ENCODE measurements at regions of chr11 and their contacts with region 1.

Region 1: DNA sequence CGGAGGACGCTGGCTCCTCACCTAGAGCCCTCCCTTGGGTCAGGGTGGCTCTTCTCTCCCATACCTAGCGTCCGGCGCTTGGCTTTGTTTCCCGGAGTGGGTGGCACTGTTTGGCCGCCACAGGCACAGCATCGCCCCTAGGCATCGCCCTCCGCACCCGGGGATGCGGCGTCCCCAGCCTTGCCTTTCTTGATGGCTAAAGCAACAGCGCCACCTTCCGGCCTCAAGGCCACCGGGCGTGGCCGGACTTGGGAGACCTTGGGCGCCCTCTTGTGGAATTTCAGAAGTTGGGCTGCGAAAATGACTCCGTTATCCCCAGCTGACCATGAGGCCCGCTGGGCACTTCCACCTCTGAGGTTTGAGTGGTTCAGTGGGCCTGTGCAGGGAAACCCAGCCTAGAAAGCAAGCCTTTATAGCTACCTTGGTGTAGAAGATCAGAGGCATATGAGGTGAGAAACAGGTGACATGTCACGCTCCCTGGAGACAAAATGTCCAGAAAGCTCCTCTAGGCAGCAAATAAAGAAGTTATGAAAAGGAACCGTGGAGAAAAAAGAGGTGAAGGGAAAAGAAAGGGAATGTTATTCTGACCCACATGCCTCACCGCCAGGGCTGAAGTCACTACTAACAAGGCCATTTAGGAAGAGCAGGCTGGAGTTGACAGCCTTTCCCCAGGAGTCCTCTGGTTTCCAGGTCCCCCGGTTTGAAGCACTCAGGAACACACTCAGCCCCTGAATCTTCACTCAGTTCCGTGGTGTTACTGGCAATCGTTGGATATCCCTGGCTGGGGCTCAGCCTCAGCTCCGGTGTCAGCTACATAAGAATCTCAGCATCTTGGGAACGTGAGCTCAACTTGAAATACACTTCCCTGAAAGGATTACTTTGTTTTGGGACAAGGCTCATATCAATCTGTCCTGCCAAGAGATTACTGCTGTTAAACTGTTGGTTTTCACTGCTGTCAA is 54.1 kb downstream of the SNX19 start:
- DNase-seq: peak; percentile 93
- ATAC-seq: peak; percentile 94
- H3K4me3 Mint-ChIP-seq: no peak overlapping the region
- H3K27ac Mint-ChIP-seq: no peak overlapping the region
- H3K4me1 Mint-ChIP-seq: no peaks in the 10 kb centered on the region
- H3K27me3 Mint-ChIP-seq: peaks cover under 1% of the 10 kb centered on the region

Region 2: DNA sequence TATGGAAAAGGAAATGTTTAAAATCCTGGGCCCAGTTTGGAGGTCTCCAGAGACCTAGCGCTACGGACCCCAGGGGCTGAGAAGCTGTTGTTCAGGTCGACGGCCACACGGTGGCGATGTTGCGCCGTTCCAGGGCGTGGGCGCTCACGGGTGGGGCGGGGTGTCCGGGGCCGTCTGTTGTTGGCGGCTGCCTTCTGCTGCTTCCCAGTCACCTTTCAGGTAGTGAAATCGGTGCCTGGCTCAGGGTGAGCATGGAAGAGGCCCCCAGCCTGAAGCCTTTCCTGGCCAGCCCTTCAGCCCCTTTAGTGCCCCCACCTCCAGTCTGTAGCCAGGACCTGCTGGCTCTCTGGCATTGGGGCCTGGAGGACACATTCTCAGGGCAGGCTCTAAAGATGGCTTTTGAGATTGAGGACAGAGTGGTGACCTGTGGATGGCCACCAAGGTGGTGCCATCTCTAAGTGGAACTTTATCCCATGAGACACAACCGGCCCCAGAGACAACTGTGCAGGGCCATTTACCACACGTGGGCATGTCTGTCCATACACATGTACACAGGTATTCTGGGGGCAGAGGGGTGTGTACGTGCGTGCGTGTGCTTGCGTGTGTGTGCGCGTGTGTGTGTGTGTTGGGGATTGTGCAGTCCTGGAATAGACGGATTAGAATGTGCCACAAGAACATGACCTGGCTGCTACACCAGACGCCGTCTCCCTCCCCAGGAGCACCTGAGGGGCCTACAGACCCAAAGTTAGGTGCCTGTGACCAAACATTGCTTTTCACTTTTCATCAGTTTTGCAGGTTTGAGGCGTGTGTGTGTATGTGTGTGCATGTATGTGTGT is 648.8 kb before region 1 on chr11:
- CTCF ChIA-PET with region 1: interaction called, 10 read pairs
- POLR2A ChIA-PET with region 1: interaction called, 3 read pairs
- intact Hi-C with region 1: loop called in 1 of 2 experiments (anchors 1 kb)
- DNase-seq: peak; percentile 83
- ATAC-seq: peak; percentile 88
- H3K4me3 Mint-ChIP-seq: no peak overlapping the region
- H3K27ac Mint-ChIP-seq: no peak overlapping the region
- H3K4me1 Mint-ChIP-seq: no peaks in the 10 kb centered on the region
- H3K27me3 Mint-ChIP-seq: peaks cover 2% of the 10 kb centered on the region

Region 3: DNA sequence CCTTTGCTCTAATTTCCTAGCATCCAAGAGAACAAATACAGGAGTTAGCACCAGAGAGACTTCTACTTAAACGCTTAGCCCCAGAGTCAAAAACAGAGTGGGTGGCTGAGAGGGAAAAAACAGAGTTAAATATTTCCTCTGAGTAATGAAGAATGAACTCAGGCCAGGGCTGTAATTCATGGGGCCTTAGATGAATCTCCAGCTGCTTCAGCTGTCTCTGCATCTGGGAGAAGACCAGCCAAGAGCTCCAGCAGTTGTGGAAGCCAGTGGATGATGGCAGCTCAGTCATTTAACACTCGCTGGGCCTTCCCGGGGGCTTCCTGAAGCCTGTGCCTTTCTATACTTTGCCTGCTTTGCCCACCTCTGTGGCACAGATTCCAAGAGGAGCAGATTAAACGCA is 419.4 kb before region 1 on chr11:
- CTCF ChIA-PET with region 1: interaction called, 256 read pairs
- POLR2A ChIA-PET with region 1: no interaction called
- intact Hi-C with region 1: no loop called
- DNase-seq: no peak
- ATAC-seq: no peak
- H3K4me3 Mint-ChIP-seq: no peak overlapping the region
- H3K27ac Mint-ChIP-seq: no peak overlapping the region
- H3K4me1 Mint-ChIP-seq: peaks cover 10% of the 10 kb centered on the region
- H3K27me3 Mint-ChIP-seq: peaks cover 6% of the 10 kb centered on the region

Region 4: DNA sequence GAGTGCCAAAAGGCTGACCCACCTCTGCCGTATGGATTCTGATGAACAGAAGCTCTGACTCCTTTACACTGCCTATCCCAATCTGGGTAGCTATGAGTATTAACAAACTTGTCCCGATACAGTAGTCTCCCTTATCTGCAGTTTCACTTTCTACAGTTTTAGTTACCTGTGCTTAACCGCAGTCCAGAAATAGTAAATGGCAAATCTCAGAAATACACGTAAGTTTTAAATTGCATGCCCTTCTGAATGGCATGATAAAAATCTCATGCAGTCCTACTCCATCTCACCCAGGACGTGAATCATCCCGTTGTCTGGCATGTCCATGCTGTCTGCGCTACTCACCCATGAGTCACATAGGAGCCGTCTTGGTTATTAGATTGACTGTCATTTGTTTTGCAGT is 14.7 kb before region 1 on chr11:
- CTCF ChIA-PET with region 1: interaction called, 21 read pairs
- POLR2A ChIA-PET with region 1: no interaction called
- intact Hi-C with region 1: no loop called
- DNase-seq: no peak
- ATAC-seq: no peak
- H3K4me3 Mint-ChIP-seq: no peak overlapping the region
- H3K27ac Mint-ChIP-seq: no peak overlapping the region
- H3K4me1 Mint-ChIP-seq: no peaks in the 10 kb centered on the region
- H3K27me3 Mint-ChIP-seq: peaks cover 2% of the 10 kb centered on the region

Region 5: DNA sequence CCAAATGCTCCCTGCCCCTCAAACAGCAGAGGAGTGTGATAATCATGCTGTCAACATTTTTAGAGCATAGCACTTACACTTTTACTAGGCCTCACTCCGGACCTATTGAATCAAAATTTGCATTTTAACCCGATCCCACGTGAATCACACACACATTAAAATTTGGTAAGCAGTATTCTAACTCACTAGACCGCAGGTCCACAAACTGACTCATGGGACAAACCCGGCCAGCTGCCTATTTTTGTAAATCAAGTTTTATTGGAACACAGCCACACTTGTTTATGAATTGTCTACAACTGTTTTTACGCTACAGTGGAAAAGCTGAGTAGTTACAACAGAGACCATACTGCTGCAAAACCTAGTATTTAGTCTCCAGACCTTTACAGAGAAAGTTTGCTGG is 10.8 kb after region 1 on chr11:
- CTCF ChIA-PET with region 1: interaction called, 25 read pairs
- POLR2A ChIA-PET with region 1: no interaction called
- intact Hi-C with region 1: no loop called
- DNase-seq: no peak
- ATAC-seq: no peak
- H3K4me3 Mint-ChIP-seq: no peak overlapping the region
- H3K27ac Mint-ChIP-seq: peak overlapping the region; percentile 61
- H3K4me1 Mint-ChIP-seq: peaks cover 7% of the 10 kb centered on the region
- H3K27me3 Mint-ChIP-seq: no peaks in the 10 kb centered on the region

Region 6: DNA sequence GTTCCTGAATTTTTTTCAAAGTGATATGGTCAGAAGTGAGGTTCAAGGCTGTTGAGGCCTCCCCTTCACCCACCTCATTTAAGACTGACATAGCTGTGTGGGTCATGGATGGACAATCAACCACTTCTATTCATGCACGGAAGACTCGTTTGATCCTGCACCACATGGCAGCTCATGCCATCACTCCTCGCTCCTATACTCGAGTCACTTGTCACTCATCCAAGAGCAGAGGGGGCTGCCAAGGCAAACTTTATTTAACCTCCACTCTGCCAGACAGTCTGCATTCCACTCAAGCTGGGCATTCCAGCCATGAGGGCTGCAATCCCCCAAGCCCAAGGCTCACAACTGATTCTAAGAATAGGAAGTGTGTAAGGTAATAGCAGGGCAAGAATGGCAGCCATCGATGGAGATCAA is 20.0 kb after region 1 on chr11:
- CTCF ChIA-PET with region 1: interaction called, 17 read pairs
- POLR2A ChIA-PET with region 1: no interaction called
- intact Hi-C with region 1: no loop called
- DNase-seq: no peak
- ATAC-seq: peak; percentile 34
- H3K4me3 Mint-ChIP-seq: no peak overlapping the region
- H3K27ac Mint-ChIP-seq: peak overlapping the region; percentile 80
- H3K4me1 Mint-ChIP-seq: peaks cover 21% of the 10 kb centered on the region
- H3K27me3 Mint-ChIP-seq: no peaks in the 10 kb centered on the region

Region 7: DNA sequence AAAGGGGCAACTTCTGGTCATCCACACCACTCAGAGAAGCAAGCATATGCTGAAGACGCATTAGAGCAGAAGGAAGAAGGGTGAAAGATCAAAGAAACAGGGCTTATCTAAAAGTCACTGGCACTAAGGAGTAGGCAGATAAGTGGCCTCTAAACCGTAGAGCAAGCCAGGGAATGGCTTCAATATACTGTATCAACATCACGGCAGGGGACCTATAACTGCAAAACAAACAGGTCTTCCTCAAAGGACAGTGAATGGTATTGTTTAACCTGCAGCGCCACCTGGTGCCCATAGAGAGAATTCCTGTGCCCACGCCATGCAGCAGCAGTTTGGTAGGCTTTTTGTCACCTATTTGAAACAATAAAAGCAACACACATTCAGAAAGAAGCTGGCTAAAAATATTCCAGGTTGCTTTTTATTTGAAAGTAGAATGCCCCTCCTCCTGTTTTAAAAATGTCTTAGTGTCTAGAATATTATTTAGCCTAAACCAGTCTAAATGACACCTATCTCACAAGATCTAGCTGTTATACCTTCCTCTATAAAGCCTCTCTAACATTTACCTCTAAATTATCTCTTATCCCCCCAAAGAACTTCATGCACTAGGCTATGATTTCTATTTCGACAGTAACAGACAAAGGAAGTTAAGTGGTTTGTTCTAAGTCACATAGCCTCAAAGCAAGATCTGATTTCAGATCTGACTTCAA is 32.3 kb after region 1 on chr11:
- CTCF ChIA-PET with region 1: interaction called, 16 read pairs
- POLR2A ChIA-PET with region 1: no interaction called
- intact Hi-C with region 1: loop called in 1 of 2 experiments (anchors 1 kb)
- DNase-seq: peak; percentile 76
- ATAC-seq: peak; percentile 92
- H3K4me3 Mint-ChIP-seq: no peak overlapping the region
- H3K27ac Mint-ChIP-seq: peak overlapping the region; percentile 6
- H3K4me1 Mint-ChIP-seq: peaks cover 12% of the 10 kb centered on the region
- H3K27me3 Mint-ChIP-seq: no peaks in the 10 kb centered on the region